Stomach (tissue), 19 donors: ENCODE measurements at regions of chr2 and their contacts with region 1.

Region 1: GRCh38 chr2:70340921-70341765 is 39.3 kb upstream of the FAM136A start:
- DNase-seq: peak in 1 of 2 donors; percentile 74
- H3K4me3 ChIP-seq: no peak overlapping the region
- H3K27ac ChIP-seq: no peak overlapping the region
- H3K4me1 ChIP-seq: no peaks in the 10 kb centered on the region
- H3K27me3 ChIP-seq: peaks cover 0 to 18% (median 0%) of the 10 kb centered on the region in 3 donors
- CTCF ChIP-seq: peak in 5 of 7 experiments; percentile 49 to 69 (median 64)
- EP300 ChIP-seq: no peak
- POLR2A ChIP-seq: no peak

Region 2: GRCh38 chr2:69449906-69450305 is 891.2 kb before region 1 on chr2:
- intact Hi-C with region 1: no loop called
- DNase-seq: no peak
- H3K4me3 ChIP-seq: no peak overlapping the region
- H3K27ac ChIP-seq: no peak overlapping the region
- H3K4me1 ChIP-seq: no peaks in the 10 kb centered on the region
- H3K27me3 ChIP-seq: no peaks in the 10 kb centered on the region
- CTCF ChIP-seq: no peak
- EP300 ChIP-seq: no peak
- POLR2A ChIP-seq: no peak

Region 3: GRCh38 chr2:70616168-70616694 is 275.1 kb after region 1 on chr2:
- intact Hi-C with region 1: loop called (anchors 5 kb)
- DNase-seq: peak in 1 of 2 donors; percentile 25
- H3K4me3 ChIP-seq: no peak overlapping the region
- H3K27ac ChIP-seq: no peak overlapping the region
- H3K4me1 ChIP-seq: peaks cover 0 to 10% (median 3%) of the 10 kb centered on the region in 4 donors
- H3K27me3 ChIP-seq: peaks cover 0 to 8% (median 0%) of the 10 kb centered on the region in 3 donors
- CTCF ChIP-seq: no peak
- EP300 ChIP-seq: no peak
- POLR2A ChIP-seq: no peak

Region 4: GRCh38 chr2:70647873-70648481 is 306.8 kb after region 1 on chr2:
- intact Hi-C with region 1: loop called (anchors 10 kb)
- DNase-seq: peak; percentile 74 to 89
- H3K4me3 ChIP-seq: no peak overlapping the region
- H3K27ac ChIP-seq: no peak overlapping the region
- H3K4me1 ChIP-seq: no peaks in the 10 kb centered on the region
- H3K27me3 ChIP-seq: peaks cover 0 to 7% (median 0%) of the 10 kb centered on the region in 3 donors
- CTCF ChIP-seq: peak in 5 of 7 experiments; percentile 86 to 97 (median 92)
- EP300 ChIP-seq: no peak
- POLR2A ChIP-seq: no peak